Caco-2 (cell line): ENCODE measurements at regions of chr20 and their contacts with region 1.

Region 1: GRCh38 chr20:53547664-53548239 is 45.9 kb downstream of the ZNF217 start:
- DNase-seq: peak; percentile 75 to 85
- H3K4me3 ChIP-seq: no peak overlapping the region
- H3K4me3 Mint-ChIP-seq: no peak overlapping the region
- H3K27ac Mint-ChIP-seq: no peak overlapping the region
- H3K4me1 ChIP-seq: peaks cover 7% of the 10 kb centered on the region; the same call in 1 of the 2 replicates
- H3K4me1 Mint-ChIP-seq: peaks cover 5% of the 10 kb centered on the region
- H3K27me3 ChIP-seq: no peaks in the 10 kb centered on the region
- H3K27me3 Mint-ChIP-seq: no peaks in the 10 kb centered on the region
- CTCF ChIP-seq: peak; percentile 99

Region 2: GRCh38 chr20:52312132-52312729 is 1235.5 kb before region 1 on chr20:
- CTCF ChIA-PET with region 1: interaction called, 12 read pairs
- POLR2A ChIA-PET with region 1: no interaction called
- intact Hi-C with region 1: no loop called
- DNase-seq: peak; percentile 63 to 75
- H3K4me3 ChIP-seq: no peak overlapping the region
- H3K4me3 Mint-ChIP-seq: no peak overlapping the region
- H3K27ac Mint-ChIP-seq: no peak overlapping the region
- H3K4me1 ChIP-seq: no peaks in the 10 kb centered on the region
- H3K4me1 Mint-ChIP-seq: no peaks in the 10 kb centered on the region
- H3K27me3 ChIP-seq: no peaks in the 10 kb centered on the region
- H3K27me3 Mint-ChIP-seq: peaks cover 26% of the 10 kb centered on the region
- CTCF ChIP-seq: peak; percentile 91 to 97

Region 3: DNA sequence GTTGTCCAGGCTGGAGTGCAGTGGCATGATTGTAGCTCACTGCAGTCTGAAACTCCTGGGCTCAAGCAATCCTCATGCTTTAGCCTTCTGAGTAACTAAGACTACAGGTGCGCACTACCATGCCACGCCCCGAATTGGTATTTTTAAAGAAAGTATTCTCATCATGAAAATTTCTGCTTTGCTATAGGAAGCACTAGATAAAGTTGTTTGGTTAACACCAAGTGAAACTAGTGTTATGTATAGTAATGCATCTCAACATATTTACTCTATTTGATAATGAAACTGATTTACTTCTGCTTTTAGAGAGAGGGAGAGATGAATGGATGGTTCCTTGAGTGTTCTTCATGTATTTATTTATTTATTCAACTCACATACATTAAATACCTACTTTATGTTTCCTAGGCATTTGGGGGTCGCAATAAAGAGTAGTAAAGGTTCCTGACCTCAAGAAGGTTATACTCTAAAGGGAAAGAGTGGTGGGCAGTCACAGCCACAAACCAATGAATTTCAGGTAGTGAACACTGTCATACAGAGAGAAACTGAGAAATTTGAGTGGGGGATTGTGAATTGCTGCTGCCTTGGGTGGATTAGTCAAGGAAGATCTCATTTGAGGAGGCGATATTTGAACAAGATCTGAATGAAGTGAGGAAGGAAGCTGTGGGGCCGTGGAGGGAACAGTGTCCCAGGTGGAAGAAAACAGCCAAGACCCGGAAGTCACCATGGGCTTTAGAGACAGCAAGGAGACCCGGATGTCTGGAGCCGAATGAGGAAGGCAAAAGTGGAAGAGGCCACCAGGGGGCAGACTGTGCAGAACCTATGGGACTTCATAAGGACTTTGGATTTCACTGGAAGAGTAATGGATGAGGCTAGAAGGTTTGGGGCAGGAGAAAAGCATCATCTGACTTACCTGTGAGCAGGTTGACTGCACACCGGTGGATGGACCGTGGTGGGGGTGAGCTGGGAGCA is 390.0 kb before region 1 on chr20:
- CTCF ChIA-PET with region 1: interaction called, 3 read pairs
- POLR2A ChIA-PET with region 1: no interaction called
- intact Hi-C with region 1: loop called (anchors 1 kb)
- DNase-seq: peak; percentile 71 to 81
- H3K4me3 ChIP-seq: no peak overlapping the region
- H3K4me3 Mint-ChIP-seq: no peak overlapping the region
- H3K27ac Mint-ChIP-seq: no peak overlapping the region
- H3K4me1 ChIP-seq: no peaks in the 10 kb centered on the region
- H3K4me1 Mint-ChIP-seq: no peaks in the 10 kb centered on the region
- H3K27me3 ChIP-seq: no peaks in the 10 kb centered on the region; the same call in 1 of the 2 replicates
- H3K27me3 Mint-ChIP-seq: no peaks in the 10 kb centered on the region
- CTCF ChIP-seq: peak; percentile 69 to 75

Region 4: GRCh38 chr20:53226826-53227225 is 320.9 kb before region 1 on chr20:
- CTCF ChIA-PET with region 1: interaction called, 11 read pairs
- POLR2A ChIA-PET with region 1: interaction called, 8 read pairs
- intact Hi-C with region 1: no loop called
- DNase-seq: no peak
- H3K4me3 ChIP-seq: no peak overlapping the region
- H3K4me3 Mint-ChIP-seq: no peak overlapping the region
- H3K27ac Mint-ChIP-seq: no peak overlapping the region
- H3K4me1 ChIP-seq: no peaks in the 10 kb centered on the region
- H3K4me1 Mint-ChIP-seq: no peaks in the 10 kb centered on the region
- H3K27me3 ChIP-seq: no peaks in the 10 kb centered on the region
- H3K27me3 Mint-ChIP-seq: peaks cover 15% of the 10 kb centered on the region
- CTCF ChIP-seq: no peak

Region 5: GRCh38 chr20:53336778-53337291 is 210.9 kb before region 1 on chr20:
- CTCF ChIA-PET with region 1: interaction called, 11 read pairs
- POLR2A ChIA-PET with region 1: no interaction called
- intact Hi-C with region 1: loop called (anchors 10 kb)
- DNase-seq: peak in 1 of 2 experiments; percentile 38
- H3K4me3 ChIP-seq: no peak overlapping the region
- H3K4me3 Mint-ChIP-seq: no peak overlapping the region
- H3K27ac Mint-ChIP-seq: no peak overlapping the region
- H3K4me1 ChIP-seq: peaks cover 3% of the 10 kb centered on the region; the same call in 1 of the 2 replicates
- H3K4me1 Mint-ChIP-seq: peaks cover 10% of the 10 kb centered on the region
- H3K27me3 ChIP-seq: no peaks in the 10 kb centered on the region
- H3K27me3 Mint-ChIP-seq: no peaks in the 10 kb centered on the region
- CTCF ChIP-seq: peak in 1 of 2 experiments; percentile 34

Region 6: GRCh38 chr20:53492212-53492611 is 55.5 kb before region 1 on chr20:
- CTCF ChIA-PET with region 1: interaction called, 13 read pairs
- POLR2A ChIA-PET with region 1: no interaction called
- intact Hi-C with region 1: no loop called
- DNase-seq: peak in 1 of 2 experiments; percentile 6
- H3K4me3 ChIP-seq: no peak overlapping the region
- H3K4me3 Mint-ChIP-seq: no peak overlapping the region
- H3K27ac Mint-ChIP-seq: no peak overlapping the region
- H3K4me1 ChIP-seq: peaks cover 12% of the 10 kb centered on the region; the same call in 1 of the 2 replicates
- H3K4me1 Mint-ChIP-seq: peaks cover 20% of the 10 kb centered on the region
- H3K27me3 ChIP-seq: no peaks in the 10 kb centered on the region
- H3K27me3 Mint-ChIP-seq: no peaks in the 10 kb centered on the region
- CTCF ChIP-seq: no peak

Region 7: GRCh38 chr20:53939572-53940359 is 392.0 kb after region 1 on chr20:
- CTCF ChIA-PET with region 1: interaction called, 22 read pairs
- POLR2A ChIA-PET with region 1: no interaction called
- intact Hi-C with region 1: no loop called
- DNase-seq: peak; percentile 95 to 96
- H3K4me3 ChIP-seq: no peak overlapping the region
- H3K4me3 Mint-ChIP-seq: no peak overlapping the region
- H3K27ac Mint-ChIP-seq: no peak overlapping the region
- H3K4me1 ChIP-seq: peaks cover 30% of the 10 kb centered on the region
- H3K4me1 Mint-ChIP-seq: peaks cover 35% of the 10 kb centered on the region
- H3K27me3 ChIP-seq: no peaks in the 10 kb centered on the region; the same call in 1 of the 2 replicates
- H3K27me3 Mint-ChIP-seq: no peaks in the 10 kb centered on the region
- CTCF ChIP-seq: peak; percentile 93 to 98